ENCODE measurements at regions of chr14 and their contacts with region 1.

Region 1: DNA sequence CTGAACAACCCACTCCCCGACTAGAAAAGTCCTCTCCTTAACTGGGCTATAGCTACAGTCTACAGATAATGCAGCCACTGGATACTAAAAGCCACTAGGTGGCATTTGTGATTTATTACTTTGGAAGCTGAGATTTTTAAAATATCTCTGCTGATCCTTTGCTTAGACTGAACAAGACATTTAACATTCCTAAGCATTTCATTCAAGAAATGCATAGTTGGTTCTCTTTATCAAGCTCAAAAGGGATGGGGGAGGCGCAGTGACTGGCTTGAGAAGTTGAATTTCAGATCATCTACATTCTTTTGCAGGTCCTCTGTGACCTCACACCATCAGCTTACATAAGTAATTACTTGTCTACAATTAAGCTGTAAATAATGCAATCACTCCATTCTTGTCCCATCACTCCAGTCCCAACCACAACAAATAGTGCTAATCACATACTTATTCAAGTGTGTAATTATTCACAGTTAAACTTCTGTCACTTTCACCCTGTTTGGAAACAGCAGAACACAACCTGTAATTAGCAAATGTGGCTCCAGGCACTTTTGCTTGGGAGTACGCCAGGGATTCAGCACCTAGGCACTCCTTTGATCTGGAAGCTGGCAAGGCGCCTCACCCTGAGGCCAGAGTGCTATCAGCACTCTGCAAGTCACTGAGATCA is 203.6 kb downstream of the NOVA1 start:
- DNase-seq: peak; percentile 59
- ATAC-seq: peak; percentile 69
- H3K4me3 ChIP-seq: no peak overlapping the region
- H3K27ac ChIP-seq: no peak overlapping the region
- H3K4me1 ChIP-seq: peaks cover 9% of the 10 kb centered on the region; the same call in 1 of the 2 replicates
- H3K27me3 ChIP-seq: no peaks in the 10 kb centered on the region
- CTCF ChIP-seq: peak; percentile 68

Region 2: DNA sequence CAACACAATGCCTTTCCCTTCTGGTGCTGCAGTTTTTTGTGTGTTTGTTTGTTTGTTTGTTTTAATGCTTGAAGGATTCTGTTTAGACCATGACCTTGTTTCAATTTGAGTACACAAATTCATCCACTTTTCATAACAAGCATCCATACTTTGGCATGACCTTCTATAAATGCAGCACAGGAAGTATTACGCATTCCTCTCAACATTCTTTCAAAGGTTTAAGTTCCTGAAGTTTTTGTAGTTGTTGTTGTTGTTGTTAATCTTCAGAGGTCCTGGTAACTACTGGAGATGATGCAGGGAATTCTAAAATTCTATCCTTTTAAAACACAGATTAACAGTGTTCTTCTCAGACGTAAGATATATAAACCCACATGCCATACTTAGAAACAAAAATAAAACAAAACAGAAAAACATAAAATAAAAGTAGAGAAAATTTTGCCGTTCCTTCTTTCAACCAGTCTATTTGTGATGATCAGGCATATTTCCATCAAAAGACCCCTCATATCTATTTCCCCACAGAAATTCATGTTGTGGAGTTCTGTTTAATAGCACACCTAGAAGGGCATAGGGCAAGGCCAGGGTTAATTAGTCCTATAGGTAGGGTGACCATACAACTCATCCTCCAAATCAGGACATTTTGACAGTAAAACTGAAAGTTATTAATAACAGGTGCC is 326.4 kb before region 1 on chr14:
- CTCF ChIA-PET with region 1: no interaction called
- POLR2A ChIA-PET with region 1: no interaction called
- intact Hi-C with region 1: no loop called
- DNase-seq: no peak
- ATAC-seq: no peak
- H3K4me3 ChIP-seq: no peak overlapping the region
- H3K27ac ChIP-seq: no peak overlapping the region
- H3K4me1 ChIP-seq: no peaks in the 10 kb centered on the region
- H3K27me3 ChIP-seq: no peaks in the 10 kb centered on the region
- CTCF ChIP-seq: no peak

Region 3: GRCh38 chr14:26191118-26191517 is 203.2 kb before region 1 on chr14:
- CTCF ChIA-PET with region 1: no interaction called
- POLR2A ChIA-PET with region 1: no interaction called
- intact Hi-C with region 1: no loop called
- DNase-seq: peak; percentile 25
- ATAC-seq: peak; percentile 45
- H3K4me3 ChIP-seq: no peak overlapping the region
- H3K27ac ChIP-seq: no peak overlapping the region
- H3K4me1 ChIP-seq: 0 out of 2 replicates have a peak, but pooled peaks cover 5% of the 10 kb centered on the region
- H3K27me3 ChIP-seq: 0 out of 2 replicates have a peak, but pooled peaks cover 3% of the 10 kb centered on the region
- CTCF ChIP-seq: peak; percentile 38; the same call in 1 of the 2 replicates

Region 4: GRCh38 chr14:26332966-26333365 is 61.3 kb before region 1 on chr14:
- CTCF ChIA-PET with region 1: interaction called, 15 read pairs
- POLR2A ChIA-PET with region 1: no interaction called
- intact Hi-C with region 1: no loop called
- DNase-seq: peak; percentile 59
- ATAC-seq: peak; percentile 79
- H3K4me3 ChIP-seq: no peak overlapping the region
- H3K27ac ChIP-seq: peak overlapping the region; percentile 32
- H3K4me1 ChIP-seq: peaks cover 26% of the 10 kb centered on the region
- H3K27me3 ChIP-seq: no peaks in the 10 kb centered on the region
- CTCF ChIP-seq: no peak

Region 5: DNA sequence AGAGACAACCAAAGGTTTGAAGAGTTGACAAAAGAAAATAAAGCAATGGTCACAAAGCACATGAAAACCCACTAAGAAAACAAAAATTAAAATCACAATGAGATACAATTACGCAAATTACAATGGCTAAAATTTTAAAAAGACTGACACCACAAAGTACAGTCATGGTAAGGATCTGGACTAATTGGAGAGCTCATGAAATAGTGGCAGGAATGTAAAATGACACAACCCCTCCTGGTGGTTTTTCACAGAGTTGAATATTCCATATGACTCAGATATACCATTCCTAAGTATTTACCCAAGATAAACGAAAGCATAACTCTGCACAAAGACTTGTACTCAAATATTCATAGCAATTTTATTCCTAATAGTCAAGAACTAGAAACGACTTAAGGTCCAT is 137.6 kb after region 1 on chr14:
- CTCF ChIA-PET with region 1: interaction called, 8 read pairs
- POLR2A ChIA-PET with region 1: no interaction called
- intact Hi-C with region 1: loop called (anchors 2 kb)
- DNase-seq: peak; percentile 76
- ATAC-seq: peak; percentile 95
- H3K4me3 ChIP-seq: no peak overlapping the region
- H3K27ac ChIP-seq: no peak overlapping the region
- H3K4me1 ChIP-seq: peaks cover 12% of the 10 kb centered on the region
- H3K27me3 ChIP-seq: no peaks in the 10 kb centered on the region
- CTCF ChIP-seq: peak; percentile 61

Region 6: GRCh38 chr14:26663506-26663905 is 269.2 kb after region 1 on chr14:
- CTCF ChIA-PET with region 1: no interaction called
- POLR2A ChIA-PET with region 1: no interaction called
- intact Hi-C with region 1: loop called (anchors 5 kb)
- DNase-seq: no peak
- ATAC-seq: no peak
- H3K4me3 ChIP-seq: no peak overlapping the region
- H3K27ac ChIP-seq: no peak overlapping the region
- H3K4me1 ChIP-seq: no peaks in the 10 kb centered on the region
- H3K27me3 ChIP-seq: no peaks in the 10 kb centered on the region
- CTCF ChIP-seq: no peak

Region 7: DNA sequence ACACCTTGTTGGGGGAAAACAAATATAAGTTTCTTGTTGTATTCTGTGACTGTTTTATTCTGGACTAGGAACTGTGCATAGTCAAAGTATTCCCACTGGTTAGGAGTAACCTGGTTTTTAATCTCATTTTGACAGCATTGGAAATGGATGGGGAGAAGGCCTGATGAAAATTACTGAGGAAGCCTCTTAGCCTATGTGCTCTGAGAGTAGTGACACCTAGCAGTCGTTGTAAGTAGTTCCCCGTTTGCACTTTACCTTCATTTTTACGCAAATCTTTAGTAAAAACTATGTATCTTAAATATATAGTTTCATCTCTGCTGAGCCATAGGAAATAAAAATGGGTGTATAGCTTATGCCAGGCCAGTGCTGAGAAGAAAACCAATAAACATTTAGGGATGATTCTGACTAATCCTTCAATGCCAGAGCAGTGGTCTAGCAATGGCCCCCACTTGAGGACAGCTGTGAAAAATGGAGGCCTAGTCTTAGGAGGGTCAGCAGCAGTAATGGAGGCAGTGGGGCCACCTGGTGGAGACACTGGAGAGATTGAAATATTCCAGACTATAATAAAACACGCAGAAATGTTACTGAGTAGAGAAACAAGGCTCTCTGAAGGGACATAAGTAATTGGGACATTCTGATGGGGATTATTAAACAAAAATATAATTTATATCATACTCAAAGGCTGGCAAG is 336.8 kb after region 1 on chr14:
- CTCF ChIA-PET with region 1: interaction called, 3 read pairs
- POLR2A ChIA-PET with region 1: no interaction called
- intact Hi-C with region 1: loop called (anchors 5 kb)
- DNase-seq: peak; percentile 41
- ATAC-seq: peak; percentile 70
- H3K4me3 ChIP-seq: no peak overlapping the region
- H3K27ac ChIP-seq: no peak overlapping the region
- H3K4me1 ChIP-seq: no peaks in the 10 kb centered on the region
- H3K27me3 ChIP-seq: no peaks in the 10 kb centered on the region
- CTCF ChIP-seq: peak; percentile 82

Region 8: DNA sequence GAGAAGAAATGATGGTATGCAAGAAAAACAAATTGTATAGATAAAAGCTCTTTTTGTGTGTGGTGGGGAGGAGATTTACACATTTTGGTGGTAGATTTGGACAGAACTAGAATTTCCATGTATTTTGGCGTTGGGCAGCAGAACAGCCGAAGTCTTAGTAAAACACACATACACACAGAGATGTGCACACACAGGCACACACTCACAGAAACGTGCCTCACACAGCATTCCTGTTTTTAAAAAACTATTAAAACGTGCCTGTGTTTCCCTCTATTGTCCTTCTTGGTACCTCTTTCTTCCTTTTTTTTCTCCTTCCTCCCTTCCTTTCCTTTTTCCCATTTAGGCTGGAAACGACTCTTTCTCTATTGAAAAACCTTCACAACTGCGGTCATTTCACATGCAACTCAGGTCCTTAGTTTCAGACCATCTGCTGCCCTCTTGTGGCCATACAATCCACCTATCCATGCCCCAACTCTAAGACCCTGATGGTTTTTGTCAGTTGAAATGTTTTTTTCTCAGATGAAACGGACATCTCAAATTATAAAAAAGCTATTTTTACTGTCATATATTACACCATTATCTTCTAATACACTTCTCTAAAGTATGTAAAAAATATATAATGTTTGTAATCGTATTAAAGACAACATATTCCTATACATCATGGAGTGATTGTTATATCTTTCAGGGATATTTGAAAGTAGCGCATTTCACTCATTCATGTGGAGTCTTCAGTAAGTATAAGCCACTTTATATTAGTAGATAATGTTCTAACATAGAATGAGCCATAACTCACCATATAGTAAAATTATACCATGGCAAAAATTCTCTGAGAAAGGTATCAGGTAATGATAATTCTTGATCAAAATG is 590.3 kb after region 1 on chr14:
- CTCF ChIA-PET with region 1: no interaction called
- POLR2A ChIA-PET with region 1: no interaction called
- intact Hi-C with region 1: loop called (anchors 1 kb)
- DNase-seq: peak; percentile 78
- ATAC-seq: peak; percentile 90
- H3K4me3 ChIP-seq: no peak overlapping the region
- H3K27ac ChIP-seq: no peak overlapping the region
- H3K4me1 ChIP-seq: no peaks in the 10 kb centered on the region
- H3K27me3 ChIP-seq: peaks cover 19% of the 10 kb centered on the region
- CTCF ChIP-seq: peak; percentile 93

Measured in PC-3 (cell line).